ENCODE measurements at regions of chr1 and their contacts with region 1.

Region 1: GRCh38 chr1:173489149-173489934 is 12.2 kb downstream of the PRDX6 start:
- DNase-seq: peak; percentile 30 to 73
- H3K4me3 ChIP-seq: no peak overlapping the region
- H3K27ac ChIP-seq: peak overlapping the region; percentile 33; the same call in 1 of the 2 replicates
- H3K4me1 ChIP-seq: peaks cover 12% of the 10 kb centered on the region
- H3K27me3 ChIP-seq: no peaks in the 10 kb centered on the region
- CTCF ChIP-seq: no peak

Region 2: GRCh38 chr1:173383351-173383750 is 106.0 kb before region 1 on chr1:
- CTCF ChIA-PET with region 1: no interaction called
- POLR2A ChIA-PET with region 1: no interaction called
- intact Hi-C with region 1: no loop called
- DNase-seq: no peak
- H3K4me3 ChIP-seq: no peak overlapping the region
- H3K27ac ChIP-seq: no peak overlapping the region
- H3K4me1 ChIP-seq: peaks cover 10% of the 10 kb centered on the region; the same call in 1 of the 2 replicates
- H3K27me3 ChIP-seq: no peaks in the 10 kb centered on the region
- CTCF ChIP-seq: no peak

Region 3: GRCh38 chr1:173507205-173507846 is 18.0 kb after region 1 on chr1:
- CTCF ChIA-PET with region 1: interaction called, 11 read pairs
- POLR2A ChIA-PET with region 1: interaction called, 5 read pairs
- intact Hi-C with region 1: no loop called
- DNase-seq: peak; percentile 49 to 92
- H3K4me3 ChIP-seq: peak overlapping the region; percentile 25; the same call in 1 of the 2 replicates
- H3K27ac ChIP-seq: peak overlapping the region; percentile 84
- H3K4me1 ChIP-seq: peaks cover 38% of the 10 kb centered on the region
- H3K27me3 ChIP-seq: no peaks in the 10 kb centered on the region
- CTCF ChIP-seq: no peak

Region 4: DNA sequence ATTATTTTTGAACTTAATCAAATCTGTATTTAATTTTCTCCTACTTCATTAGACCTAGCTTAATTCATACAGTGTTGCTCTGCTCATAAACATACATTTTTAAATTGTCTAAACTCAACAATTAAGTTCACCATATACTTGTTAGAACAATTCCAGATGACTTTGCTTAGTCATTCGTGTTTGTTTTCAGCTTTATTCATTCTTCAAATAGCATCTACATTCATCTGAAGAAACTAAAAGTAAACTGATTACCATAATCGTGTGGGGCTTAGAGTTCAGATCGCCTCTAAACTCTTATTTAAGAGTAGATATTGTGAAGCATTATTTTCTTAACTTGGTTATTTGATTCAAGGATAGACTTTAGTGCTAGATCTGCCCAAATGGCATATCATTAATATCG is 259.8 kb after region 1 on chr1:
- CTCF ChIA-PET with region 1: no interaction called
- POLR2A ChIA-PET with region 1: interaction called, 18 read pairs
- intact Hi-C with region 1: no loop called
- DNase-seq: no peak
- H3K4me3 ChIP-seq: no peak overlapping the region
- H3K27ac ChIP-seq: no peak overlapping the region
- H3K4me1 ChIP-seq: no peaks in the 10 kb centered on the region
- H3K27me3 ChIP-seq: no peaks in the 10 kb centered on the region
- CTCF ChIP-seq: no peak